Activated naive CD4-positive, alpha-beta T cell treated with anti-CD3 and anti-CD28 coated beads for 36 hours (primary cell): ENCODE measurements at regions of chr6 and their contacts with region 1.

Region 1: DNA sequence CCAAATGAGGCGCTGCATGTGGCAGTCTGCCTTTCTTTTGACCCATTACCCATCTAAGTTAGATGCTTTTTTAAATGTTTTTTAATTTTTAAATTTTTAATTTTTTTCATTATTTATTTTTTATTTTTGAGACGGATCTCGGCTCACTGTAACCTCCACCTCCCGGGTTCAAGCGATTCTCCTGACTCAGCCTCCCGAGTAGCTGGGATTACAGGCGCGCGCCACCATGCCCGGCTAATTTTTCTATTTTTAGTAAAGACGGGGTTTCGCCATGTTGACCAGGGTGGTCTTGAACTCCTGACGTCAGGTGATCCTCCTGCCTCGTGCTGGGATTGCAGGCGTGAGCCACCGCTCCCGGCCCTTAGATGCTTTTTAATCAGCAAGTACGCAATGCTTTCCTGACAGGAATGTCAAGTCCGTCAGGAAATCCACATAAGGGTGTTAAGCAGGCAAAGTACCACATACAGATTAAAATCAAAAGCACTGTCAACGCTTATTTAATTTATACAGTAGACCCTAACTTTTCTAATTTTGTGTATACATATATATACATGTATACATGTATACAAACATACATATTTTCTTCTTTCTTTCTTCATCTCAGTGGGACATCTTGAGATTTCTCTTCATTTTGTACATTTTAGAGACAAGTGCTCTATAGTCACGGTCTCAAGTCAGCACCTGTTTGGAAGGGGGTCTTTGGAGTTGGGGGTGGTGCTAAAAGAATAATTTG is 995 bp upstream of the GSTA4 start:
- DNase-seq: peak; percentile 54
- H3K4me3 Mint-ChIP-seq: peak overlapping the region; percentile 98
- H3K27ac Mint-ChIP-seq: peak overlapping the region; percentile 99
- H3K4me1 Mint-ChIP-seq: peaks cover 29% of the 10 kb centered on the region
- H3K27me3 Mint-ChIP-seq: peaks cover 13% of the 10 kb centered on the region

Region 2: DNA sequence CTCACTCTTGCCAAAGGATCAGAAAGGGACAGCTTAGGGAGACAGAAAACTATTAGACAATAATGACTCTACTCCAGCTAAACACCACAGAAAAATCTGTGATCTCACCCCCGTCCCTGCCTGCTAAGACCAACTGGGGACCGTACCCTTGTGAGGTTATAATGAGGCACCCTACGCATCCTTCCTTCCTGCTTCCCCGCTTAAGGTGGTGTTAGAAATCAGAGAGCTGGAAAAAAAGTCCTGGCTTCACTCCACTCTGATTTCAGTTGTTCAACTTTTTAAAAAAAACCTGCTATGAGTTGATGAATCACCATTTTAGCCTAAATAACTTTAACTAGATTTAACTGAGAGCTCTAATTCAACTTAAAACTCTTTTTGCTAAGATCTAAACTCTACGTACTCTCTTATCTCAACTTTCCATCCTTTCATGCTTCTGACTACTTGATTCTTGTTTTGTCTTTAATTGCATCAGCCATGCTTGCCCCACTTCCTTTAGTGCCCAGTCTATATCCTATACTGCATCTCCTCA is 361.0 kb before region 1 on chr6:
- CTCF ChIA-PET with region 1: no interaction called
- intact Hi-C with region 1: loop called (anchors 10 kb)
- DNase-seq: peak; percentile 75
- H3K4me3 Mint-ChIP-seq: peak overlapping the region; percentile 25
- H3K27ac Mint-ChIP-seq: peak overlapping the region; percentile 67
- H3K4me1 Mint-ChIP-seq: peaks cover 18% of the 10 kb centered on the region
- H3K27me3 Mint-ChIP-seq: peaks cover 5% of the 10 kb centered on the region

Region 3: GRCh38 chr6:52815167-52816092 is 180.6 kb before region 1 on chr6:
- CTCF ChIA-PET with region 1: no interaction called
- intact Hi-C with region 1: loop called (anchors 2 kb)
- DNase-seq: peak; percentile 67
- H3K4me3 Mint-ChIP-seq: no peak overlapping the region
- H3K27ac Mint-ChIP-seq: no peak overlapping the region
- H3K4me1 Mint-ChIP-seq: no peaks in the 10 kb centered on the region
- H3K27me3 Mint-ChIP-seq: no peaks in the 10 kb centered on the region

Region 4: DNA sequence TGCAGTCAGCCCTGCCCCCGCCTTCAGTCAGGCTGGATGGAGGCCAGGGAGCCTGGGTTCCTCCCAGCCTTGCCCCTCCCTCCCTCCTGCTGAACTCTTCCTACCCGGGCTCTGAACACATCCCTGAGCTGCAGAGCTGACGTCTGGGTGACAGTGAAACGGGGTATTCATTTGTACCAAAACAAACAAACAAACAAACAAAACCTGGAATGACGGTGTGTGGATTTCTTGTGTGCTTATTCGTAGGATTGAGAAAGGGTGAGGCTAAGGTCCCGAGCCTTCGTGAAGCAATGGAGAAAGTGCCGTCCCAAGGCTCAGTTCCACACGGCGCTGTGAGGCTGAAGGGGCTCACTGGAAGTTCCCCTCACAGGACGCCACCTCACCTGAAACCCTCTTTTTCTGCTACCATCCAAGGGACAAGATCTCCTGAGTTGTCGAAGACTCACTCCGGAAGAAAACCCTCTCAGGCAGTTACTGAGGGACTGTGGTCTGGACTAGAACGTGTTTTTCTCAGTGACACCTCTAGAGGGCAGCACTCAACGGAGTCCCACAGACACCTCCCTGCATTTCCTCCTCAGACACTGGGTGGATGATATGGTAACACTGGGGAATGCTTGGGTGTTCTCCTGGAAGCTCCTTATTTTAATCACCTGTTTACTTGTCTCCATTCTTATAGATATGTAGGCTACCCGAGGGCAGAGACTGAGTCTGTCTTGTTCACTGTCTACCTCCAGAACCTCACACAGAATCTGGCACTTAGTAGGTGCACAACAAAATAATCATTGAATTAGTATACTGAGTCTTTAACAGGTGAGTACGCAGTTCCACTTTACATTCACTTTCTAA is 113.9 kb before region 1 on chr6:
- CTCF ChIA-PET with region 1: interaction called, 3 read pairs
- intact Hi-C with region 1: loop called (anchors 1 kb)
- DNase-seq: peak; percentile 84
- H3K4me3 Mint-ChIP-seq: peak overlapping the region; percentile 71
- H3K27ac Mint-ChIP-seq: peak overlapping the region; percentile 27
- H3K4me1 Mint-ChIP-seq: peaks cover 5% of the 10 kb centered on the region
- H3K27me3 Mint-ChIP-seq: peaks cover 2% of the 10 kb centered on the region

Region 5: DNA sequence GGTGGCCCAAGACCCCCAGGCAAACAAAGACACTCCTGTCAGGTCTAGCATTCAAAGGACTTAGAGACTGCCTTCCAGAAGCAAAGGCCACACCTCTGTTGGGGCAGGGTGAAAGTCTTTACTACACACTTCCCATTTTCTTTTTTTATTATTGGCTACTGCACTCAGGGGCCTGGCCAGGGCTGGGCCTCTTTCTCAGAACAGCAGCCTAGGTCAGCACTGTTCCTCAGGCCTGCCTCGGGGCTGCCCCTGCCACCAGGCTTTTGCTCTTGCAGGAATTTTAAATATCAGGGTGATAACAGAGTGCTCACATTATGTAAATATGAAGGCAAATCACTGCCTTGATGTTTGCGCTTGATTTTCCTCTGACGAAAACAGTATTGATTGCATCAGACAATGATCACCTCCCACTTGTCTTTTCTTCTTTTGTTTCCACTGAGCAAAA is 19.5 kb before region 1 on chr6:
- CTCF ChIA-PET with region 1: interaction called, 4 read pairs
- intact Hi-C with region 1: loop called (anchors 1 kb)
- DNase-seq: peak; percentile 74
- H3K4me3 Mint-ChIP-seq: peak overlapping the region; percentile 12
- H3K27ac Mint-ChIP-seq: peak overlapping the region; percentile 92
- H3K4me1 Mint-ChIP-seq: peaks cover 34% of the 10 kb centered on the region
- H3K27me3 Mint-ChIP-seq: peaks cover 10% of the 10 kb centered on the region

Region 6: DNA sequence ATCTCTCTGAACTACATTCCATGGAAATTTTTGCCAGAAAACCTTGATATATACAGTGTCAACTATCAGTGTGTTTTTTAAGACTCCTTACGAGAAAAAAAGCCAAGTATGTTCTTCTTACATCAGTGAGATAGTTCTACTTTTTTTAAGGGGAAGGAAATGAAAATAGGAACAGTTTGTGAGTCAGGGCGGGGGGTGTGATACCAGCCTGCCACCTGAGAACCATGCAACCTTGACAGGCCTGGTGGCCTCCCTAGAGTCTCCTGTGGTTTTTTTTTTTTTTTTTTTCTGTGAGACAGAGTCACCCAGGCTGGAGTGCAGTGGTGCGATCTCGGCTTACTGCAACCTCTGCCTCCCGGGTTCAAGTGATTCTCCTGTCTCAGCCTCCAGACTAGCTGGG is 248.9 kb after region 1 on chr6:
- CTCF ChIA-PET with region 1: no interaction called
- intact Hi-C with region 1: loop called (anchors 10 kb)
- DNase-seq: peak; percentile 65
- H3K4me3 Mint-ChIP-seq: no peak overlapping the region
- H3K27ac Mint-ChIP-seq: no peak overlapping the region
- H3K4me1 Mint-ChIP-seq: peaks cover 37% of the 10 kb centered on the region
- H3K27me3 Mint-ChIP-seq: no peaks in the 10 kb centered on the region